Naive thymus-derived CD4-positive, alpha-beta T cell (primary cell): ENCODE measurements at regions of chr9 and their contacts with region 1.

Region 1: GRCh38 chr9:114906908-114907571 is 23.4 kb downstream of the TNFSF8 start:
- DNase-seq: peak in 2 of 9 donors; percentile 31 to 41
- ATAC-seq: peak; percentile 39
- H3K4me3 ChIP-seq: no peak overlapping the region
- H3K4me3 Mint-ChIP-seq: peak overlapping the region in 5 of 10 donors; percentile 6 to 79 (median 74)
- H3K27ac ChIP-seq: no peak overlapping the region
- H3K27ac Mint-ChIP-seq: peak overlapping the region in 8 of 9 donors; percentile 20 to 96 (median 53)
- H3K4me1 ChIP-seq: peaks cover 60 to 78% of the 10 kb centered on the region in 2 donors
- H3K4me1 Mint-ChIP-seq: peaks cover 50 to 79% (median 58%) of the 10 kb centered on the region in 7 donors
- H3K27me3 ChIP-seq: no peaks in the 10 kb centered on the region
- H3K27me3 Mint-ChIP-seq: no peaks in the 10 kb centered on the region

Region 2: DNA sequence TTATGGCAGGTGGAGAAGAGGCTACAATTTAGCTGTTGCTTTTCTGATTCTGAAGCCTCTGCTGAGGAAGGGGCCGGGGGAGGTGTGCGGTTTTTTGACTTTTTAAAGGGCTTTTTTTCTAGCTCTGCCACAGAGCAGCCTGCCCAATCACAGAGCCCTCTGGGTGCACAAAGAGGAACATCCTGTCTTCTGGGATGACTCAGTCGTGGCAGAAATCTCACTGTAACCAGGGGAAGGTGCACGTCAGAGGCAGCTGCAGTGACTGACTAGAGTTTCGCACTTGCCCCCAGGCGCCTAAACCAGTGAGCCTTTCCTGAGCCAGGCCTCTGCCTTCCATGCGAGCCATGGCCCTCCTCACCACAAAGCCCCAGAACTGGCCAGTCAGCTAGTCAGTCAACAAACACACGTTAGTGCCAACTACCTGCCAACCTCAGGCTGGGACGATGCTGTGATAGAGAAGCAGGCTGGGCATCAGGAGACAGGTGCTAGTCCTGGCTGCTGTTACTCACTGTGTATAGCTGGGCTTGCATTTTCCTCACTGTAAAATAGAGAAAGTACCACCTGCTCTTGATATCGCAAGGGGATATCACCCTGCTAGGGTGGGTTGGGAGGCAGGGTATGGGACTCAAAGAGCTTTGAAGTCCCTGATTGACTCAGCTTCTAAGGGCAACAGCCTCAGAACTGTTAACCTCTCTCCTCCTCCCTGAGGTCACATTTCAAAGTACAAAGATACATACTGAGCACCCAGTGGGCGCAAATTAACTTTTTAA is 521.4 kb before region 1 on chr9:
- CTCF ChIA-PET with region 1: no interaction called
- POLR2A ChIA-PET with region 1: interaction called, 4 read pairs
- intact Hi-C with region 1: loop called in 1 of 2 experiments (anchors 5 kb)
- DNase-seq: peak; percentile 68 to 96 (median 93)
- ATAC-seq: peak; percentile 88
- H3K4me3 ChIP-seq: peak overlapping the region; percentile 63
- H3K4me3 Mint-ChIP-seq: peak overlapping the region; percentile 89 to 100 (median 96)
- H3K27ac ChIP-seq: peak overlapping the region; percentile 87
- H3K27ac Mint-ChIP-seq: peak overlapping the region; percentile 88 to 100 (median 96)
- H3K4me1 ChIP-seq: peaks cover 72 to 75% of the 10 kb centered on the region in 2 donors
- H3K4me1 Mint-ChIP-seq: peaks cover 61 to 77% (median 70%) of the 10 kb centered on the region in 7 donors
- H3K27me3 ChIP-seq: no peaks in the 10 kb centered on the region
- H3K27me3 Mint-ChIP-seq: no peaks in the 10 kb centered on the region

Region 3: GRCh38 chr9:114505187-114506081 is 401.6 kb before region 1 on chr9 and contains the start of gene WHRN:
- CTCF ChIA-PET with region 1: no interaction called
- POLR2A ChIA-PET with region 1: no interaction called
- intact Hi-C with region 1: loop called in 1 of 2 experiments (anchors 10 kb)
- DNase-seq: peak; percentile 80 to 94 (median 89)
- ATAC-seq: peak; percentile 95
- H3K4me3 ChIP-seq: peak within 1 kb of the TSS; percentile 59
- H3K4me3 Mint-ChIP-seq: peak within 1 kb of the TSS; percentile 83 to 90 (median 88)
- H3K27ac ChIP-seq: peak within 1 kb of the TSS; percentile 57
- H3K27ac Mint-ChIP-seq: peak within 1 kb of the TSS; percentile 55 to 94 (median 87)
- H3K4me1 ChIP-seq: peaks cover 14 to 29% of the 10 kb centered on the region in 2 donors
- H3K4me1 Mint-ChIP-seq: peaks cover 5 to 26% (median 22%) of the 10 kb centered on the region in 7 donors
- H3K27me3 ChIP-seq: no peaks in the 10 kb centered on the region
- H3K27me3 Mint-ChIP-seq: peaks cover 0 to 86% (median 33%) of the 10 kb centered on the region in 5 donors
- total RNA-seq, gene WHRN: 1.1 to 24.0 (median 3.0) TPM

Region 4: DNA sequence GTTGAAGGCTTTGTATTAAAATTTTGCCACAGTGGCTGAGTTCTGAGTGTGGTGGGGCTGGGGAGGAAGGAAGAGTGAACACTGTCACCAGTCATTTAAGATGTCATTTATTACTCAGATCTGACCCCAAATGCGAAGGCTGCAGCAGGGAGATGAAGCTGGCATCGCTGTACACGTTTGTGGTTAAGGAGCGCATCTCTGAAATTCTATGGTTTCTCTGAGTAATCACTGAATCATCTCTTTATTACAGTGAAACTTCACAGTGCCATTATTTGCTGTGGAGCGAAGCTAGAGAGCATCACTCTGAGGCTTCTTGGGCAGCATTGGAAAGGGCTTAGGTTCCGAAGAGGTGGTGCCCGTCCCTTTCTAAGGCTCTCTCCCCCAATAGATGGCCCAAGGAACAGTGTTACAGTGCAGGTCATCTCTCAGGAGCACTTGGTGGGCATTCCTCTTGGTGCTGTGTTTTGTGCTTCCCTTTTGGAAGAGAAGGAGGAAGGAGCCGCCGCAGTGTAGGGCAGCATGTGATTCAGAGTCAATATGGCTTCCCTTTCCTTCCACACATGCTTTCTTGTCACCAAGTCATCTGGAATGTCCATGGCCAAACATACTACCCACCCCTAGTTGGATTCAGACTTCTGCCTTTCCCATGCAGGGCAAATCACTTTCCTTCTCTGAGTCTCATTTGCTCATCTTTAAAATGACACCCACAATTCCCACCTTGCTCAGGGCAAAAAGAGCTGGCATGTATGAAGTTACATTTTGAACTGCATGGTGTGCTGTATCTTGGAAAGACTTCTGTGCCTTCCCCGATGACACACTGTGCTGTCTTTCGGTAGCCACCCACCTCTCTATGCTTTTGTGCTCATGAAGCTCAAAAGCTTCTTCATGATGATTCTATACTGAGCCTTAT is 215.7 kb before region 1 on chr9:
- CTCF ChIA-PET with region 1: interaction called, 3 read pairs
- POLR2A ChIA-PET with region 1: no interaction called
- intact Hi-C with region 1: loop called in 1 of 2 experiments (anchors 2 kb)
- DNase-seq: peak in 5 of 9 donors; percentile 4 to 66 (median 6)
- ATAC-seq: peak; percentile 84
- H3K4me3 ChIP-seq: peak overlapping the region; percentile 2
- H3K4me3 Mint-ChIP-seq: peak overlapping the region in 8 of 10 donors; percentile 0 to 66 (median 12)
- H3K27ac ChIP-seq: no peak overlapping the region
- H3K27ac Mint-ChIP-seq: peak overlapping the region in 4 of 9 donors; percentile 64 to 91 (median 80)
- H3K4me1 ChIP-seq: peaks cover 0 to 24% of the 10 kb centered on the region in 2 donors
- H3K4me1 Mint-ChIP-seq: peaks cover 6 to 90% (median 12%) of the 10 kb centered on the region in 7 donors
- H3K27me3 ChIP-seq: no peaks in the 10 kb centered on the region
- H3K27me3 Mint-ChIP-seq: no peaks in the 10 kb centered on the region

Region 5: GRCh38 chr9:114718801-114719221 is 188.2 kb before region 1 on chr9:
- CTCF ChIA-PET with region 1: no interaction called
- POLR2A ChIA-PET with region 1: no interaction called
- intact Hi-C with region 1: loop called in 1 of 2 experiments (anchors 1 kb)
- DNase-seq: peak in 5 of 9 donors; percentile 8 to 91 (median 18)
- ATAC-seq: peak; percentile 76
- H3K4me3 ChIP-seq: no peak overlapping the region
- H3K4me3 Mint-ChIP-seq: peak overlapping the region in 9 of 10 donors; percentile 0 to 75 (median 19)
- H3K27ac ChIP-seq: no peak overlapping the region
- H3K27ac Mint-ChIP-seq: peak overlapping the region in 6 of 9 donors; percentile 12 to 97 (median 64)
- H3K4me1 ChIP-seq: peaks cover 14 to 34% of the 10 kb centered on the region in 2 donors
- H3K4me1 Mint-ChIP-seq: peaks cover 10 to 88% (median 20%) of the 10 kb centered on the region in 7 donors
- H3K27me3 ChIP-seq: no peaks in the 10 kb centered on the region
- H3K27me3 Mint-ChIP-seq: no peaks in the 10 kb centered on the region

Region 6: DNA sequence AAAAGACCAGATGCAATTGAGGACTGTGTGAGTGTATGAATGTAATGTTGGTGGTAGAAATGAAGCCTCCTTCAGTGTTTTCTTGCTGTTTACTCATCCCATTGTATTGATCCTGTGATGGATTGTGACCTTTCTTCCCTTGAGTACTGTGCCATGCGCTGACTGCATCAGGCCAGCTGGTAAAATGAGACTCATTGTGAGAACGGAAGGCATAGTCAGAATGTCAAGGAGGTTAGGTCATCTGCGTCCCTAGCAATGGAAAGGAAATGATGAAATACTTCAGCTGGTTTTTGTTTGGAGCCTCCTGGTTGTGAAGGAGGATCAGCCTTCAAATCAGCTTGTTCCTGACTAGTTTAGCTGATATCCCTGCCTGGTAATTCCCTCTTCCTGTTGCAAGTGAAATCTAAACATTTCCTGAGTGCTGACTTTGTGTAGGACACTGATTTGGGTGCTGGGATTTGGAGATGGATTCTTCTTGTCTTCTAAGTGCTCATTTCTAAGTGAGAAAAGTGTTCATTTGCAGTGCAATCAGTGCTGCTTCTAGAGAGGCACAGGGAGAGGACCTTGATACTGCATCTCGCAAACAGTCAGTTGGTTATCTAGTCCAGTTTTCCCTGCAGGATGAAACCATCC is 12.1 kb before region 1 on chr9:
- CTCF ChIA-PET with region 1: interaction called, 8 read pairs
- POLR2A ChIA-PET with region 1: interaction called, 25 read pairs
- intact Hi-C with region 1: loop called (anchors 1 kb)
- DNase-seq: no peak
- ATAC-seq: peak; percentile 27
- H3K4me3 ChIP-seq: no peak overlapping the region
- H3K4me3 Mint-ChIP-seq: peak overlapping the region in 7 of 10 donors; percentile 11 to 73 (median 34)
- H3K27ac ChIP-seq: no peak overlapping the region
- H3K27ac Mint-ChIP-seq: peak overlapping the region in 7 of 9 donors; percentile 24 to 87 (median 48)
- H3K4me1 ChIP-seq: peaks cover 56 to 73% of the 10 kb centered on the region in 2 donors
- H3K4me1 Mint-ChIP-seq: peaks cover 17 to 54% (median 32%) of the 10 kb centered on the region in 7 donors
- H3K27me3 ChIP-seq: no peaks in the 10 kb centered on the region
- H3K27me3 Mint-ChIP-seq: no peaks in the 10 kb centered on the region

Region 7: DNA sequence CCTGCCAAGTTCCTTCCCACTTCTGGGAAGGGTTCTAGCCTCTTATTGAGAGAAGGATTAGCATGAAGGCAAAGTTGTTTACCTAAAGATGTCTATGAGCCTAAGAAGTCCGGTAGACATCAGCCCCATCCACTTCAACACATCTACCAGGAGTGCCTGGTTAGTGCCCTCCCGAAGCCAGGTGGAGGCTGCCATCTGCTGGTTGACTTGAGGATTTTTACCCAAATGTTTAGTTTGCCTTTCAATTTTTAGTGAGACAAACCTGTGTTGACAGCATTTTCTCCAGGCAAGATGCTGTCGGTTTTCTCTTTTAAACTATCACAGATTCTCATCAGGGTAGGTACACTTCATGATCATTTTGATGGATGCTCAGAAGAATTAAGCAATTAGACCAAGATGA is 107.0 kb after region 1 on chr9:
- CTCF ChIA-PET with region 1: interaction called, 49 read pairs
- POLR2A ChIA-PET with region 1: no interaction called
- intact Hi-C with region 1: loop called (anchors 1 kb)
- DNase-seq: peak; percentile 57 to 84 (median 79)
- ATAC-seq: peak; percentile 88
- H3K4me3 ChIP-seq: no peak overlapping the region
- H3K4me3 Mint-ChIP-seq: peak overlapping the region in 1 of 10 donors; percentile 24
- H3K27ac ChIP-seq: no peak overlapping the region
- H3K27ac Mint-ChIP-seq: peak overlapping the region in 2 of 9 donors; percentile 12 to 79
- H3K4me1 ChIP-seq: peaks cover 0 to 4% of the 10 kb centered on the region in 2 donors
- H3K4me1 Mint-ChIP-seq: peaks cover 5 to 59% (median 12%) of the 10 kb centered on the region in 7 donors
- H3K27me3 ChIP-seq: no peaks in the 10 kb centered on the region
- H3K27me3 Mint-ChIP-seq: peaks cover 4 to 14% (median 7%) of the 10 kb centered on the region in 5 donors